ENCODE measurements at regions of chr17 and their contacts with region 1.

Region 1: DNA sequence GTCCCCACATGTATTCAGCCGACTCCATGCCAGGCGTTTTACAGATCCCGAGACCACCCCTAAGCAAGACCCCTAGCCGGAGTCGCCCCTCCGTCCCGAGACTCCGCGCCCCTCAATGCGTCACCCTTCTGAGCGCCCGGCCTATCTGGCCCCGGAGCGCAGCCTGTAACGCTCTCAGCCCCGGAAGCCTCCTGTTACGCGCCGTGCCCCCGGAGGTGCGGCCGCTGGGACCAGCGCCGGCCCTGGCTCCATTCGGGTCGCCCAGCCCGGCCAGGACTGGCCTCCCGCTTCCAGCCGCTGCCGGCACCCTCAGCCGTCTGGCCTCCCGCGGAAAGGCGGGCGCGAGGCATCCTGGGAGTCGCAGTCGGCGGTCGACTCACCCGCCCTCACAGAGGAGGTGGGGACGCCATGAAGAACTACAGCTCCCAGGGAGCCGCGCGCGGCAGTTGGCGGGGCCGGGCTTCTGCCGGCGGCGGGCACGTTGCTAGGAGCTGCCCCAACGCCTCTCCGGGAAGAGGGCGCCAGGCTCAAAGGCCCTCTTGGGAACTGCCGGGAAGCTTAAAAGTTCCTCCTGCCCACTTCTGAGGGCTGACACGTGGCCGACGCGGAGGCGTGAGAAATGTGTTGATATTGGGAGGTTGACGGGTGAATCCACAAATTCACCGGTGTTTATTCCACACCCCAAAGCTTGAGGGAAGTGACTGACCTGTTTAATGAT is at the start of gene FBF1:
- DNase-seq: peak; percentile 94
- ATAC-seq: peak; percentile 100
- H3K4me3 Mint-ChIP-seq: peak within 1 kb of the TSS; percentile 92
- H3K27ac Mint-ChIP-seq: peak within 1 kb of the TSS; percentile 82
- H3K4me1 Mint-ChIP-seq: peaks cover 13% of the 10 kb centered on the region
- H3K27me3 Mint-ChIP-seq: no peaks in the 10 kb centered on the region
- total RNA-seq, gene FBF1: 16.2 to 18.0 TPM

Region 2: GRCh38 chr17:75896415-75897159 is 44.3 kb before region 1 on chr17 and contains the start of gene TRIM65:
- CTCF ChIA-PET with region 1: no interaction called
- POLR2A ChIA-PET with region 1: no interaction called
- intact Hi-C with region 1: loop called in 1 of 2 experiments (anchors 2 kb)
- DNase-seq: peak; percentile 86
- ATAC-seq: peak; percentile 85
- H3K4me3 Mint-ChIP-seq: peak within 1 kb of the TSS; percentile 84
- H3K27ac Mint-ChIP-seq: peak within 1 kb of the TSS; percentile 72
- H3K4me1 Mint-ChIP-seq: peaks cover 19% of the 10 kb centered on the region
- H3K27me3 Mint-ChIP-seq: no peaks in the 10 kb centered on the region
- total RNA-seq, gene TRIM65: 28.9 to 31.9 TPM

Region 3: GRCh38 chr17:75920045-75920560 is 20.8 kb before region 1 on chr17:
- CTCF ChIA-PET with region 1: no interaction called
- POLR2A ChIA-PET with region 1: no interaction called
- intact Hi-C with region 1: no loop called
- DNase-seq: no peak
- ATAC-seq: no peak
- H3K4me3 Mint-ChIP-seq: no peak overlapping the region
- H3K27ac Mint-ChIP-seq: no peak overlapping the region
- H3K4me1 Mint-ChIP-seq: peaks cover 2% of the 10 kb centered on the region
- H3K27me3 Mint-ChIP-seq: no peaks in the 10 kb centered on the region

Measured in activated CD4-positive, alpha-beta T cell treated with anti-CD3 and anti-CD28 coated beads for 36 hours (primary cell).